ENCODE measurements at regions of chr10 and their contacts with region 1.

Region 1: GRCh38 chr10:21655687-21656086 is 121.7 kb downstream of the MLLT10 start:
- H3K4me3 Mint-ChIP-seq: no peak overlapping the region
- H3K27ac Mint-ChIP-seq: no peak overlapping the region
- H3K4me1 Mint-ChIP-seq: no peaks in the 10 kb centered on the region
- H3K27me3 Mint-ChIP-seq: no peaks in the 10 kb centered on the region

Region 2: GRCh38 chr10:21464143-21464533 is 191.5 kb before region 1 on chr10:
- intact Hi-C with region 1: no loop called
- H3K4me3 Mint-ChIP-seq: no peak overlapping the region
- H3K27ac Mint-ChIP-seq: no peak overlapping the region
- H3K4me1 Mint-ChIP-seq: no peaks in the 10 kb centered on the region
- H3K27me3 Mint-ChIP-seq: peaks cover 1% of the 10 kb centered on the region

Region 3: GRCh38 chr10:21687266-21688008 is 31.8 kb after region 1 on chr10:
- intact Hi-C with region 1: loop called (anchors 2 kb)
- H3K4me3 Mint-ChIP-seq: no peak overlapping the region
- H3K27ac Mint-ChIP-seq: no peak overlapping the region
- H3K4me1 Mint-ChIP-seq: peaks cover 7% of the 10 kb centered on the region
- H3K27me3 Mint-ChIP-seq: no peaks in the 10 kb centered on the region

Region 4: GRCh38 chr10:21732067-21732772 is 76.5 kb after region 1 on chr10:
- intact Hi-C with region 1: no loop called
- H3K4me3 Mint-ChIP-seq: no peak overlapping the region
- H3K27ac Mint-ChIP-seq: no peak overlapping the region
- H3K4me1 Mint-ChIP-seq: peaks cover 7% of the 10 kb centered on the region
- H3K27me3 Mint-ChIP-seq: no peaks in the 10 kb centered on the region